Endothelial cell of umbilical vein (primary cell): ENCODE measurements at regions of chrX and their contacts with region 1.

Region 1: GRCh38 chrX:20393944-20394343 is 127.2 kb upstream of the RPS6KA3 start:
- DNase-seq: no peak
- H3K4me3 ChIP-seq: no peak overlapping the region
- H3K27ac ChIP-seq: no peak overlapping the region
- H3K4me1 ChIP-seq: no peaks in the 10 kb centered on the region
- H3K27me3 ChIP-seq: no peaks in the 10 kb centered on the region
- CTCF ChIP-seq: no peak
- POLR2A ChIP-seq: no peak

Region 2: GRCh38 chrX:19647731-19648588 is 746.0 kb before region 1 on chrX:
- CTCF ChIA-PET with region 1: no interaction called
- POLR2A ChIA-PET with region 1: no interaction called
- dilution Hi-C with region 1: no loop called
- intact Hi-C with region 1: no loop called
- DNase-seq: no peak
- H3K4me3 ChIP-seq: no peak overlapping the region
- H3K27ac ChIP-seq: no peak overlapping the region
- H3K4me1 ChIP-seq: no peaks in the 10 kb centered on the region
- H3K27me3 ChIP-seq: no peaks in the 10 kb centered on the region
- CTCF ChIP-seq: no peak
- POLR2A ChIP-seq: no peak

Region 3: DNA sequence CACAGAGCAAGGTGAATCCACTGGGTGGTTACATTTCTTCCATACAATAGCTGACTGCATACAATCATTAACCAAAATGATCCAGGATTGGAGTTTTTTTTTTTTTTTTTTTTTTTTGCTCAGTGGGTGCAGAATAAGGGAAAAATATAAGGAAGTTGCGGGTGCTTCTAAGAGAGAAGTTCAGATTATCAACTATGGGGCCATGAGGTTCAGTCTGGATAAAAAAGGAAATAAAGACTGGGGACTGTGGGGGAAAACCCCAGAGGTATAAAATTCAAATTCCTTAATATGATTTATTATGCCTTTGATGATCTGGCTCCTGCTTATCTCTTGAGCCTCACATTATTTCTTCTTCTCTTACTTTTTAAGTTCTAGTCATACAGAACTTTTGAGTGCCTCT is 246.4 kb before region 1 on chrX:
- CTCF ChIA-PET with region 1: no interaction called
- POLR2A ChIA-PET with region 1: no interaction called
- dilution Hi-C with region 1: no loop called
- intact Hi-C with region 1: no loop called
- DNase-seq: no peak
- H3K4me3 ChIP-seq: no peak overlapping the region
- H3K27ac ChIP-seq: no peak overlapping the region
- H3K4me1 ChIP-seq: peaks cover 8% of the 10 kb centered on the region
- H3K27me3 ChIP-seq: no peaks in the 10 kb centered on the region
- CTCF ChIP-seq: no peak
- POLR2A ChIP-seq: no peak

Region 4: DNA sequence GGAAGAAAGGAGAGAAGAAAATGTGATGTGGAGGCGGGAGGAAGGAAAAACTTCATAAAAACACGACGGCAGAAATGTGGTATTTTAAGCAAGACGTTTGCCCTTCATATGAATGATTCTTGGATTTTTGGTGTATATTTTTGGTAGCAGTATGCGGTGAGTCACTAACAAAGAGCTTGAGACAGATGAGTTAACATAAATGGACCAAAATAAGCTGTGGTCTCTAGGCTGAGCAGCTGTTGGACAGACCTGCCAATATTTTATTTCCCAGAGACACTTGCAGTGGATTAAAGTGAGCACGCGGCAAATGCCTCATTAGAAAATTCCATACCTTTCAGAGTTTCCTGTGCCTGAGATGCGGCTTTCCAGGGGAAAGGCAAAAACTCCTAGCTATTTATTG is 84.1 kb before region 1 on chrX:
- CTCF ChIA-PET with region 1: no interaction called
- POLR2A ChIA-PET with region 1: no interaction called
- dilution Hi-C with region 1: no loop called
- intact Hi-C with region 1: loop called (anchors 10 kb)
- DNase-seq: no peak
- H3K4me3 ChIP-seq: no peak overlapping the region
- H3K27ac ChIP-seq: no peak overlapping the region
- H3K4me1 ChIP-seq: no peaks in the 10 kb centered on the region
- H3K27me3 ChIP-seq: no peaks in the 10 kb centered on the region
- CTCF ChIP-seq: no peak
- POLR2A ChIP-seq: no peak

Region 5: GRCh38 chrX:20412871-20413486 is 19.0 kb after region 1 on chrX:
- CTCF ChIA-PET with region 1: no interaction called
- POLR2A ChIA-PET with region 1: no interaction called
- dilution Hi-C with region 1: no loop called
- intact Hi-C with region 1: no loop called
- DNase-seq: no peak
- H3K4me3 ChIP-seq: no peak overlapping the region
- H3K27ac ChIP-seq: no peak overlapping the region
- H3K4me1 ChIP-seq: no peaks in the 10 kb centered on the region
- H3K27me3 ChIP-seq: no peaks in the 10 kb centered on the region
- CTCF ChIP-seq: no peak
- POLR2A ChIP-seq: no peak

Region 6: GRCh38 chrX:20825984-20826383 is 432.0 kb after region 1 on chrX:
- CTCF ChIA-PET with region 1: no interaction called
- POLR2A ChIA-PET with region 1: no interaction called
- dilution Hi-C with region 1: no loop called
- intact Hi-C with region 1: no loop called
- DNase-seq: no peak
- H3K4me3 ChIP-seq: no peak overlapping the region
- H3K27ac ChIP-seq: no peak overlapping the region
- H3K4me1 ChIP-seq: no peaks in the 10 kb centered on the region
- H3K27me3 ChIP-seq: no peaks in the 10 kb centered on the region
- CTCF ChIP-seq: no peak
- POLR2A ChIP-seq: no peak